GM23248 (cell line): ENCODE measurements at regions of chr12 and their contacts with region 1.

Region 1: DNA sequence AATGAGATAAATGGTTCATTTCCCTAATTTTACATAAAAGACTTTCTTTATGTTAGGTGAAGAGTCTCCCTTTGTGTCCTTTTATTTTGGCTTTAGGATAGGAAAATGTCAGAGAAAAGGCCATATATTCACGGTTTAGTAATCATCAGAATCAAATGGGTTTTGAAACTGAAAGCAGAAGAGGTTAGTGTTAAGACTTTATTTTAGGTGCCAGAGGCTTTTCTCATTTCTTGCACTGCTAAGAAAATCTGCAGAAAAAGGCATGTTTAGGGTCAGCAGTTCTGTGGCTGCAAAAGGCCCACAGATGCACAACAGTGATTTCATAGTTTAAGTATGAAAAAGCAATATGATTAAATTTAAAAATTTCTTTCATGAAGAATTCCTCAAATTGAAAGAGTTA is 80.4 kb upstream of the SINHCAF start:
- DNase-seq: no peak
- H3K4me3 ChIP-seq: no peak overlapping the region
- H3K27ac ChIP-seq: no peak overlapping the region
- H3K4me1 ChIP-seq: peaks cover 4% of the 10 kb centered on the region
- H3K27me3 ChIP-seq: no peaks in the 10 kb centered on the region

Region 2: GRCh38 chr12:31634620-31635019 is 228.3 kb after region 1 on chr12:
- in situ Hi-C with region 1: loop called (anchors 5 kb)
- DNase-seq: no peak
- H3K4me3 ChIP-seq: no peak overlapping the region
- H3K27ac ChIP-seq: no peak overlapping the region
- H3K4me1 ChIP-seq: peaks cover 9% of the 10 kb centered on the region
- H3K27me3 ChIP-seq: no peaks in the 10 kb centered on the region